ENCODE measurements at regions of chr2 and their contacts with region 1.

Region 1: GRCh38 chr2:219057709-219058540 is 2.8 kb downstream of the IHH start:
- DNase-seq: peak; percentile 90
- CTCF ChIP-seq: peak; percentile 99

Region 2: GRCh38 chr2:218754201-218754600 is 303.7 kb before region 1 on chr2:
- CTCF ChIA-PET with region 1: no interaction called
- POLR2A ChIA-PET with region 1: no interaction called
- DNase-seq: no peak
- CTCF ChIP-seq: no peak

Region 3: GRCh38 chr2:218894151-218894879 is 163.6 kb before region 1 on chr2:
- CTCF ChIA-PET with region 1: no interaction called
- POLR2A ChIA-PET with region 1: no interaction called
- DNase-seq: no peak
- CTCF ChIP-seq: no peak

Region 4: DNA sequence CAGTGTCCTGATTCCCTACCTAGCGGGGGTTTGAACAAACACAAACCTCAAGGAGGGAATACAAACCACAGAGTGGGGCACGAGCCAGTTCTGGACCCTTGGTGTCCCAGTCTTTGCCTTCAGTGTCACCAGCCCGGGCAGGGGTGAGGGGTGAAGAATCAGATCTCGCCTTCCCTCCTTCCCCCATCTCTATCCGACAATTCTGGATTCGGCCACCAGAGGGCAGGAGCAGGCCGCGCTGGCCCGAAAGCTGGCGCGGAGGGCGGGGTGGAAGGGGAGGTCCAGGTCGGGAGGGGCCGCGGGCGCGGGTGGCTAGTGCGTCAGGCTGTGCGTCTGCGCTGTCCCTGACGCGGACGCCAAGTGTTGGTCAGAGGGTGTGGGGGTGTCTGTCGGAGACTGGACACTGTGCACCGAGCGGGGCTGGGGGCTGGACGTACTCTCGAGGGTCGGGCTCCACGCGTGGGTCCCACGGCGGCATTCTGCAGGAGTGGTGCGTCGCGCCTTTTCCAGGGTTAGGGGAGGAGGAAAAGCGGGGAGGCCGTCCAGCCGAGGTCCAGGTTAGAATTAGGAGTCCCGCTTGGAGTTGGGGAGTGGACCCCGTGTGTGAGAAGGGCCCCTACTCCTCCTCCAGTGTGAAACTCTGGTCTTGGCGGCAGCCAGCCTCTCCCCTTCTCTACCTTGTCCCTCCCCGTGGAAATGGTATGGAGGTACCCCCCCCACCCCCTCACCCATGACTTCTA is 61.8 kb before region 1 on chr2:
- CTCF ChIA-PET with region 1: interaction called, 10 read pairs
- POLR2A ChIA-PET with region 1: no interaction called
- DNase-seq: peak; percentile 88
- CTCF ChIP-seq: peak; percentile 92

Region 5: DNA sequence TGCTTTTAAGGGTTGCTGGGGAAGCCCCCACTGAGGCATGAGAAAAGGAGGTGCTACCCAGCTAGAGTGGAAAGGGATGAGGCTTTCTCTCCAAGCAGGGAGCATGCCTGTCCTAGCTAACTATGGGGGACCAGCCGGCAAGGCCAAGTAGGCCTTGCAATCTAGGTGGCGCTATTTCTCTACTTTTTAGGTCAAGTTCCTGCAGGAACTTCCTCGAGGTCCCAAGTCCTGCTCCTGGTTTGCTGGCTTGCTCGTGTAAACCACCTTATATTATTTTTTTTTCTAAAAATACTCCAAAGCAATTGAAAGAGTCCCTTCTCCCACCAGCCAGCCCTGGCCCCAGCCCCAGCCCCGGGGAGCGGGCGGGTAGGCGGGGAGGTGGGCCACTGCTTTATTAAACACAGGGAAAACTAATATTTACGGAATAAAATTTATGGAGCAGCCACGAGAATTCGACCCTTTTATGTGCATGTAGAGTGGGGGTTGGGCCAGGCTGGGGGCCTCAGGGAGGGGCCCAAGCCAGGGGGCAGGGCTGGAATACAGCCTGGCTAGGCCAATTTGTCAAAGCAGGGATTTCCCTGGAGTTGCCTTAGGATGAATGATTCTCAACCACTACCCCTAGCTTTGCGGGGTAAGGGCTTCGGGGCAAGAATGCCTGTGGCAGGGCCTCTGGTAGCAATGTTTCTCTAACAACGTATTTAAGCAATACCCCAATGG is 15.6 kb after region 1 on chr2:
- CTCF ChIA-PET with region 1: interaction called, 48 read pairs
- POLR2A ChIA-PET with region 1: no interaction called
- DNase-seq: peak; percentile 67
- CTCF ChIP-seq: peak; percentile 55

Region 6: GRCh38 chr2:219104107-219105035 is 46.4 kb after region 1 on chr2:
- CTCF ChIA-PET with region 1: interaction called, 17 read pairs
- POLR2A ChIA-PET with region 1: no interaction called
- DNase-seq: peak; percentile 69
- CTCF ChIP-seq: peak; percentile 31

Region 7: GRCh38 chr2:219126551-219126950 is 68.6 kb after region 1 on chr2:
- CTCF ChIA-PET with region 1: interaction called, 144 read pairs
- POLR2A ChIA-PET with region 1: no interaction called
- DNase-seq: no peak
- CTCF ChIP-seq: no peak

Region 8: GRCh38 chr2:219155054-219155644 is 97.2 kb after region 1 on chr2:
- CTCF ChIA-PET with region 1: interaction called, 138 read pairs
- POLR2A ChIA-PET with region 1: no interaction called
- DNase-seq: peak; percentile 64
- CTCF ChIP-seq: peak; percentile 49

Region 9: GRCh38 chr2:219475697-219476651 is 418.0 kb after region 1 on chr2:
- CTCF ChIA-PET with region 1: no interaction called
- POLR2A ChIA-PET with region 1: no interaction called
- DNase-seq: peak; percentile 79
- CTCF ChIP-seq: peak; percentile 84

Measured in GM10248 (cell line).